ENCODE measurements at regions of chr3 and their contacts with region 1.

Region 1: DNA sequence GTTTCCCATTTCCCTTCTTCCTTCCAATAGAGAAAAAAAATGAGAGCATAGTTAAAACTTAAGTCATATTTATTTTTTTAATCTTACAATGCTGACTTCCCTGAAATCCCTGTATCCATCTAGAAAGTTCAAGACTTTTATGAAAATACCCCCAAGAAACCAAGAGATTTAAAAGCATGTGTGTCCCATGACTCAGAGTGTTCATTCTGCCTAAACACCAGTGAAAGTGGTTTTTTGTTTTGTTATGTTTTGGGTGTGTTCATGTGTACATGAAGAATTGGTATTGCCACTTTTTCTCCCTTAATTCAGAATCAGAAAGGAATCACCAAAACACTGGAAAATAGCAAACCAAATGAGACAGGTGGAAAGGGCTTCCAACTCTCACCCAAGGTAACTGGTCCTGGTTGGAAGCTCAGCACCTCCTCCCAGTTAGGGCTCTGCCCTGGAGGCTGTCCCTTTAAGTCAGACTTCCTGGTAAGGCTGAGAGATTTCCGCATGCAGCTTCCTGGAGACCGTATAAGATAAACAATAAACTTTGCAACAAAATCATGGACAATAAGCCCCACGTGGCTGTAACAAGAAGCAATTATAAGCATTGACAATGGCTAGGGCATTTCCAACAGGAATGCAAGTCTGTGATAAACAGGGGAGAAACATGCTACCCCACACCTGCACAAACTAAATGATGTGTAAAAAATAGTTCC is 121.9 kb upstream of the ARHGEF3 start:
- DNase-seq: no peak

Region 2: DNA sequence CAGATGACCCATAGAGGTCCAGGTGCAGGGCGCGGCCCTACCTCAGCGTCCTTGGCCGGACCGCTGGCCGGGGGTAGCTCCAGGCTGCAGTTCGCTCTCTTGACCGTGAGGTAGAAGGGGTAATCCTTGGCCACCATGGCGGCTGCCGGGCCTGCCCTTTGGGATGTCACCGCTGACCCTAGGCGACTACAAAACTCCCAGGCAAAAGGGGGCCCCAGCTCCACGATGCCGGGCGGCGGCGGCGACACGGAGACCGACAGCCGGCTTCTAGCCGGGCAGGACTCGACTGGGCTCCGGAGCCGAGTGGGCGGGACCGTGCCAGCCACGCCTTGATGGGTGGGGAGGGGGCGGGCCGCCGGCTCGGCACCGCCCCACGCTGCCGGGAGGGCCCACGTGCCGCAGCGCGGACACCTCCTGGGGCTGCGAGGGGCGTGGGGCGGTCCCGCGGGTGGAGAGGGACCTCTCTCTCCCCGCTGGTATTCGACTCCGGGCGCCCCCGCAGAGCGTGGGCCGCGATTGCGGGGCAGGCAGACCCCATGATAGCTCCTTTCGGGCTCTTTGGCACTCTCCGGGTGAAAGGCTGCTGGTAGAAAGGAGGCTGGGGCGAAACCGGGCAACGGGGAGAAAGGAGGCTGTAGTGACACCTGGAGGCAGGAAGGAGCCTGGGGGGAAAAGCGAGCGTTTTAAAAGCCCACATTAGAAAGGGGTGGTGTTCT is 121.9 kb before region 1 on chr3 and contains the start of gene ARHGEF3:
- intact Hi-C with region 1: loop called (anchors 5 kb)
- DNase-seq: peak; percentile 95
- total RNA-seq, gene ARHGEF3: 23.1 TPM

Region 3: DNA sequence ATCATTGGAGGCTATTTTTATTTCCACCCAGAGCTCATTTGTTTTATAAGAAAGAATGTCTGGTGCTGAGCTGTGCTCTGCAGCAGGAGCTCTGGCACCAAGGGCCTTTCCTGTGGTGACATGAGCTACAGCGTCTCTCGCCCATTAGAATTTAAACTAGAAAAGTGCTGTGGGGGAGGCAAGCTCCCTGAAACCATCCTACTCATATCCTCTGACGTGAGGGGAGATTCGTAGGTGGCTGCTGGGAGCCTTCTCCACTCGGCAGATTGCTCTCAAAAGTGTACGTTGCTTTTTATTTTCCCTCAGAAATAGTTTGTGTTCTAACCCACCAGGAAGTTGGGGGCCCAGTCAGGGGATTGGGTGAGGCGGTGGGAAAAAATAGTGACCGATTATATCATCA is 45.6 kb before region 1 on chr3:
- intact Hi-C with region 1: loop called (anchors 2 kb)
- DNase-seq: no peak

Measured in cardiac septum (tissue), 1 donor.